ENCODE measurements at regions of chr21 and their contacts with region 1.

Region 1: DNA sequence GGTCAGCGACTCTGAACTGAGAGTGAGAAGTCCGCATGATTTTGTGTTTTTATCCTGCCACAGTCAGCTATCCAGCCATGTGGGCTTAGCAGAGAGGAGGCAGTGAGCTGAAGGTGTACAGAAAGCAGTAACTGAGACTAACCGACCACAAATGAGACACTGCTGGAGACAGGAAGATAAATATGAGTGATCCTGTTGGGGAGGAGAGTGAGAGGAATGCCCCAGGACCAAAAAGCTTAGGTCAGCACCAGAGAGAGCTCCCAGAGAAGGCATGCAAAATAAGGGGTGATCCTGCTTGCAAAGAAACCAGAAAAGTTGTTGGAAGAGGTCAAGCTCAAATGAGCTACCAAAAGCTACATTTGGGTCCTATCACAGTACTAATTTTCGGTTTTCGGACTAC is 63.7 kb downstream of the HLCS start:
- DNase-seq: peak; percentile 55
- ATAC-seq: peak; percentile 72
- H3K4me3 ChIP-seq: no peak overlapping the region
- H3K27ac ChIP-seq: no peak overlapping the region
- H3K4me1 ChIP-seq: peaks cover 5% of the 10 kb centered on the region; the same call in 1 of the 2 replicates
- H3K27me3 ChIP-seq: no peaks in the 10 kb centered on the region
- CTCF ChIP-seq: no peak
- POLR2A ChIP-seq: no peak
- RAD21 ChIP-seq: no peak

Region 2: GRCh38 chr21:36813052-36813451 is 89.7 kb before region 1 on chr21:
- CTCF ChIA-PET with region 1: no interaction called
- POLR2A ChIA-PET with region 1: no interaction called
- dilution Hi-C with region 1: no loop called
- in situ Hi-C with region 1: no loop called
- intact Hi-C with region 1: no loop called
- DNase-seq: no peak
- ATAC-seq: no peak
- H3K4me3 ChIP-seq: no peak overlapping the region
- H3K27ac ChIP-seq: no peak overlapping the region
- H3K4me1 ChIP-seq: no peaks in the 10 kb centered on the region
- H3K27me3 ChIP-seq: no peaks in the 10 kb centered on the region
- CTCF ChIP-seq: no peak
- POLR2A ChIP-seq: no peak
- RAD21 ChIP-seq: no peak

Region 3: DNA sequence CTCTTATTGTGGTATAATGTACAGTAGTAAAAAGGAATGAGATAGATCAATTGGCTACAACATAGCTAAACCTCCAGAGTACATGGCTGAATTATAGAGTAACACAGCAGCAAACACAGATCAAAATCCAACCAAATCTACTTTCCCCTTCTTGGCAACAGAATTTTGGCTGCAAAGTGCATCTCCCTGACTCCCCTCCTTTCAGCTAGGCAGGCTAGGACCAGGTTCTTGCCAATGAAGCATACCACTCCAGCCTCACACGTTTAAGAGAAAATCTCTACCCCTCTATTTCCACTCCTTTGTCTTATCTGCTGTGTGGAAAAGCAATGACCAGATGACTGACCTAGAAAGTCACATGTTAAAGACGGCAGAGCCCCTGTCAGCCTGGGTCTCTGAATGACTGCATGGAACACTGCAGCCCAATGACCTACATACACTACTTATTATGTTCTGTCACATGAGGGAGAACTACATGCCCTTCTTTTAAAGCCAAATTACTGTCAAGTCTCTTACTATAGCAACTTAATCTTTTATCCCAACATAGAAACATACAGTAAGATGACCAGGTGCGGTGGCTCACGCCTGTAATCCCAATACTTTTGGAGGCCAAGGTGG is 35.4 kb before region 1 on chr21:
- CTCF ChIA-PET with region 1: interaction called, 3 read pairs
- POLR2A ChIA-PET with region 1: no interaction called
- dilution Hi-C with region 1: no loop called
- in situ Hi-C with region 1: no loop called
- intact Hi-C with region 1: loop called (anchors 5 kb)
- DNase-seq: no peak
- ATAC-seq: no peak
- H3K4me3 ChIP-seq: no peak overlapping the region
- H3K27ac ChIP-seq: no peak overlapping the region
- H3K4me1 ChIP-seq: no peaks in the 10 kb centered on the region
- H3K27me3 ChIP-seq: no peaks in the 10 kb centered on the region
- CTCF ChIP-seq: no peak
- POLR2A ChIP-seq: no peak
- RAD21 ChIP-seq: no peak

Region 4: GRCh38 chr21:36959020-36959835 is 56.4 kb after region 1 on chr21:
- CTCF ChIA-PET with region 1: no interaction called
- POLR2A ChIA-PET with region 1: no interaction called
- dilution Hi-C with region 1: no loop called
- in situ Hi-C with region 1: no loop called
- intact Hi-C with region 1: no loop called
- DNase-seq: no peak
- ATAC-seq: no peak
- H3K4me3 ChIP-seq: no peak overlapping the region
- H3K27ac ChIP-seq: no peak overlapping the region
- H3K4me1 ChIP-seq: no peaks in the 10 kb centered on the region
- H3K27me3 ChIP-seq: no peaks in the 10 kb centered on the region
- CTCF ChIP-seq: no peak
- POLR2A ChIP-seq: no peak
- RAD21 ChIP-seq: no peak

Region 5: DNA sequence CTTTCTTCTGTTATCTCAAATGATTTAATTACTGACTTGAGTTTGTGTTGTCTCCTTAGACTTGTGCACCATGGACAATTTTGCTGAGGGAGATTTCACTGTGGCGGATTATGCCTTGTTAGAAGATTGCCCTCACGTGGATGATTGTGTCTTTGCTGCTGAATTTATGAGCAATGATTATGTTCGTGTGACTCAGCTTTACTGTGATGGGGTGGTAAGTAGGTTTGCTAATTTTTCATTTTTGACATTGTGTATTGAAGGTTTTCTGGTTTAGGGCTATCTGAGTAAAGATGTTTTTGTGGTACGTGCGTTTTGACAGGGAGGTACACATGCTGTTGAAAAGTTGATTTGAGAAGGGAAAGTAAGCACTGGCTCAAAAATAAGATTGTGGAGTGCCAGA is 184.4 kb after region 1 on chr21:
- CTCF ChIA-PET with region 1: no interaction called
- POLR2A ChIA-PET with region 1: no interaction called
- dilution Hi-C with region 1: no loop called
- in situ Hi-C with region 1: no loop called
- intact Hi-C with region 1: no loop called
- DNase-seq: peak; percentile 82
- ATAC-seq: peak; percentile 79
- H3K4me3 ChIP-seq: no peak overlapping the region
- H3K27ac ChIP-seq: no peak overlapping the region
- H3K4me1 ChIP-seq: peaks cover 4% of the 10 kb centered on the region; the same call in 1 of the 2 replicates
- H3K27me3 ChIP-seq: no peaks in the 10 kb centered on the region
- CTCF ChIP-seq: peak; percentile 68
- POLR2A ChIP-seq: no peak
- RAD21 ChIP-seq: peak; percentile 72